Vagina (tissue), 2 donors: ENCODE measurements at regions of chr12 and their contacts with region 1.

Region 1: GRCh38 chr12:91355150-91356006 is 172.8 kb upstream of the DCN start:
- DNase-seq: no peak
- H3K4me3 ChIP-seq: no peak overlapping the region
- H3K27ac ChIP-seq: no peak overlapping the region
- H3K4me1 ChIP-seq: no peaks in the 10 kb centered on the region
- H3K27me3 ChIP-seq: no peaks in the 10 kb centered on the region
- CTCF ChIP-seq: peak; percentile 73 to 90 (median 78)
- POLR2A ChIP-seq: no peak

Region 2: GRCh38 chr12:90978117-90978770 is 377.1 kb before region 1 on chr12:
- intact Hi-C with region 1: loop called (anchors 10 kb)
- DNase-seq: no peak
- H3K4me3 ChIP-seq: no peak overlapping the region
- H3K27ac ChIP-seq: peak overlapping the region; percentile 14
- H3K4me1 ChIP-seq: no peaks in the 10 kb centered on the region
- H3K27me3 ChIP-seq: no peaks in the 10 kb centered on the region
- CTCF ChIP-seq: peak; percentile 65 to 81 (median 69)
- POLR2A ChIP-seq: no peak